ENCODE measurements at regions of chr17 and their contacts with region 1.

Region 1: GRCh38 chr17:37174205-37174604 is 201.6 kb upstream of the C17orf78 start:
- DNase-seq: peak; percentile 48 to 70
- ATAC-seq: peak; percentile 95 to 97
- H3K4me3 ChIP-seq: no peak overlapping the region
- H3K27ac ChIP-seq: no peak overlapping the region
- H3K4me1 ChIP-seq: 0 out of 3 replicates have a peak, but pooled peaks cover under 1% of the 10 kb centered on the region
- CTCF ChIP-seq: peak; percentile 60
- EP300 ChIP-seq: no peak
- POLR2A ChIP-seq: no peak
- RAD21 ChIP-seq: peak; percentile 65 to 68

Region 2: GRCh38 chr17:37158290-37158689 is 15.9 kb before region 1 on chr17:
- CTCF ChIA-PET with region 1: interaction called, 10 read pairs
- POLR2A ChIA-PET with region 1: no interaction called
- DNase-seq: no peak
- ATAC-seq: no peak
- H3K4me3 ChIP-seq: no peak overlapping the region
- H3K27ac ChIP-seq: no peak overlapping the region
- H3K4me1 ChIP-seq: peaks cover 5% of the 10 kb centered on the region; the same call in 1 of the 3 replicates
- CTCF ChIP-seq: no peak
- EP300 ChIP-seq: no peak
- POLR2A ChIP-seq: no peak
- RAD21 ChIP-seq: no peak

Region 3: GRCh38 chr17:37164057-37164456 is 10.1 kb before region 1 on chr17:
- CTCF ChIA-PET with region 1: interaction called, 26 read pairs
- POLR2A ChIA-PET with region 1: no interaction called
- DNase-seq: no peak
- ATAC-seq: no peak
- H3K4me3 ChIP-seq: no peak overlapping the region
- H3K27ac ChIP-seq: no peak overlapping the region
- H3K4me1 ChIP-seq: peaks cover 10% of the 10 kb centered on the region; the same call in 1 of the 3 replicates
- CTCF ChIP-seq: no peak
- EP300 ChIP-seq: no peak
- POLR2A ChIP-seq: no peak
- RAD21 ChIP-seq: no peak

Measured in A549 (cell line).